ENCODE measurements at regions of chr3 and their contacts with region 1.

Region 1: DNA sequence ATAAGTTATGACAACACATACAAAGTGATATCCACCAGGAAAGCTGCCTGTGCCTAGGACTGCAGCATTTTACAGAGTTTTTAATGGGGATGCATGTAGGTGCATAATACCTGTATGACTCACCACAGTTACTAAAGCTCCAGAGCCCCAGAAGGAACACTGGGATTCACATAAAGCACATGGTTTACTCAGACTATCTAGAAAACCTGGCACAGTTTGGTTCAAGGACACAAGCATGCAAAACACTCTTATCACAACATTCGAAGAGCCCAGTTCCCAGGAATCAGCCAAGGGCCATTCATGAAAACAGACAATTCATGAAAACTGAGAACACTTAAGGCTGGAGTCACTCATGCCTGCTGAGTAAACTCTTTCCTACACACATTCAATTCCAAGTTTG is 261.0 kb downstream of the PYDC2 start:
- DNase-seq: no peak
- H3K4me3 ChIP-seq: no peak overlapping the region
- H3K27ac ChIP-seq: no peak overlapping the region
- H3K4me1 ChIP-seq: no peaks in the 10 kb centered on the region
- H3K27me3 ChIP-seq: no peaks in the 10 kb centered on the region
- CTCF ChIP-seq: no peak
- POLR2A ChIP-seq: no peak

Region 2: DNA sequence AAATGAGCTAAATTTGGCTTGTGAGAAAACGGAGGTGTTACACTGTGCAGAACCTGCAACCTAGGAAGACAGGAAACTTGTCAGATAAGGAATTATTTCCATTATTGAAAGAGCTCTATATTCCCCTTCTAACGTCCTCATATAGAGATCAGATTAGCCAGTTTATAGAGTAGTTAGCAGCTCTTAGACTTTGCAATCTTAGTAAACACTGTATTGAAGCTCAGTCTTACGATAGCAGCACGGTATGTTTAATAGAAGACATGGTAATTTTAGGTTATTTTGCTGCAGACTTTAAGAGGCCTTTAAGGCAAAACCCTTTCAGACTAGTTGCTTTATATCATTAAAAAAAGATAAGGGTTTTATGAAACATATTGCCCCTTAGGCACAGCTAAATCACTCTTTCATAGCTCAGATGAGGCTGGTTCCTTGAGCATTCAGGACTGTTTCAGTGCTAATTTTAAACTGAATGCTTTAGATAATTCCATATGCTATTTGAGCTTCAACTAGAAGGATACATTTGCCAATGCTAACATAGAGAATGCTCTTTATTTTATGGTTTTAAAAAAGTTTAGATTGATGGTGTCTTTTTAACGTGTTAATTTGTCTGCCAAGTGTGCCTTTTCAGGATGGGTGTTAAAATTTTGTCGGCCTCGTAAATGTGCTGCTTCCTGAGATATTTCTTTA is 26.7 kb before region 1 on chr3:
- intact Hi-C with region 1: loop called (anchors 2 kb)
- DNase-seq: no peak
- H3K4me3 ChIP-seq: no peak overlapping the region
- H3K27ac ChIP-seq: no peak overlapping the region
- H3K4me1 ChIP-seq: no peaks in the 10 kb centered on the region
- H3K27me3 ChIP-seq: no peaks in the 10 kb centered on the region
- CTCF ChIP-seq: no peak
- POLR2A ChIP-seq: no peak